ENCODE measurements at regions of chr16 and their contacts with region 1.

Region 1: DNA sequence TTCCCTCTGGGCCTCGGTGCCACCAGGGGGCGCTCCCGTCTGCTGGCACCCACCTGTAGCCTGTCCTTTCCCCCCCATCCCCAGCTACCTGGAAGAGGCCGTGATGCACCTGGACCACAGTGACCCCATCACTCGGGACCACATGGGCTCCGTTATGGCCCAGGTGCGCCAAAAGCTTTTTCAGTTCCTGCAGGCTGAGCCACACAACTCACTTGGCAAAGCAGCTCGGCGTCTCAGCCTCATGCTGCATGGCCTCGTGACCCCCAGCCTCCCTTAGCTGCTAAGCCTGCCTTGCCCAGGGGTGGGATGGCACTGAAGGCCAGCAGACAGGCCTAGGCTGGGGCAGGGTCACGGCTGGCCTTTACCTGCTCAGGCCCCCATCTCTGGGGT is 818 bp upstream of the NRN1L start:
- DNase-seq: peak; percentile 80
- H3K4me3 ChIP-seq: no peak overlapping the region
- H3K27ac ChIP-seq: peak overlapping the region; percentile 64 to 70 (median 68)
- H3K4me1 ChIP-seq: peaks cover 0 to 13% (median 9%) of the 10 kb centered on the region in 4 donors
- H3K27me3 ChIP-seq: no peaks in the 10 kb centered on the region
- CTCF ChIP-seq: peak; percentile 76 to 91 (median 86)
- EP300 ChIP-seq: no peak
- POLR2A ChIP-seq: no peak

Region 2: DNA sequence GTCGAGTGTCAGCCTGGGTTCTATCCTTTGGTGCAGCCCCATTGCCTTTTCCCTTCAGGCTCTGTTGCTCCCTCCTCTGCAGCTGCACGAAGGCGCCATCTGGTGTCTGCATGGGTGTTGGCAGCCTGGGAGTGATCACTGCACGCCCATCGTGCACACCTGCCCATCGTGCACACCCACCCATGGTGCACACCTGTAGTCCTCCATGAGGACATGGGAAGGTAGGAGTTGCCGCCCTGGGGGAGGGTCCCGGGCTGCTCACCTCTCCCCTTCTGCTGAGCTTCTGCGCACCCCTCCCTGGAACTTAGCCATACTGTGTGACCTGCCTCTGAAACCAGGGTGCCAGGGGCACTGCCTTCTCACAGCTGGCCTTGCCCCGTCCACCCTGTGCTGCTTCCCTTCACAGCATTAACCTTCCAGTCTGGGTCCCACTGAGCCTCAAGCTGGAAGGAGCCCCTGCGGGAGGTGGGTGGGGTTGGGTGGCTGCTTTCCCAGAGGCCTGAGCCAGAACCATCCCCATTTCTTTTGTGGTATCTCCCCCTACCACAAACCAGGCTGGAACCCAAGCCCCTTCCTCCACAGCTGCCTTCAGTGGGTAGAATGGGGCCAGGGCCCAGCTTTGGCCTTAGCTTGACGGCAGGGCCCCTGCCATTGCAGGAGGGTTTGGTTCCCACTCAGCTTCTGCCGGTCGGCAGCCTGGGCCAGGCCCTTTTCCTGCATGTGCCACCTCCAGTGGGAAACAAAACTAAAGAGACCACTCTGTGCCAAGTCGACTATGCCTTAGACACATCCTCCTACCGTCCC is 44.9 kb after region 1 on chr16:
- intact Hi-C with region 1: loop called (anchors 1 kb)
- DNase-seq: peak; percentile 84
- H3K4me3 ChIP-seq: no peak overlapping the region
- H3K27ac ChIP-seq: no peak overlapping the region
- H3K4me1 ChIP-seq: peaks cover 0 to 15% (median 10%) of the 10 kb centered on the region in 4 donors
- H3K27me3 ChIP-seq: no peaks in the 10 kb centered on the region
- CTCF ChIP-seq: peak; percentile 53 to 76 (median 68)
- EP300 ChIP-seq: no peak
- POLR2A ChIP-seq: no peak

Region 3: GRCh38 chr16:68040507-68041288 is 156.8 kb after region 1 on chr16:
- intact Hi-C with region 1: loop called (anchors 5 kb)
- DNase-seq: peak; percentile 88
- H3K4me3 ChIP-seq: no peak overlapping the region
- H3K27ac ChIP-seq: no peak overlapping the region
- H3K4me1 ChIP-seq: no peaks in the 10 kb centered on the region
- H3K27me3 ChIP-seq: no peaks in the 10 kb centered on the region
- CTCF ChIP-seq: peak; percentile 48 to 80 (median 76)
- EP300 ChIP-seq: no peak
- POLR2A ChIP-seq: no peak